K562 (cell line): ENCODE measurements at regions of chr14 and their contacts with region 1.

Region 1: DNA sequence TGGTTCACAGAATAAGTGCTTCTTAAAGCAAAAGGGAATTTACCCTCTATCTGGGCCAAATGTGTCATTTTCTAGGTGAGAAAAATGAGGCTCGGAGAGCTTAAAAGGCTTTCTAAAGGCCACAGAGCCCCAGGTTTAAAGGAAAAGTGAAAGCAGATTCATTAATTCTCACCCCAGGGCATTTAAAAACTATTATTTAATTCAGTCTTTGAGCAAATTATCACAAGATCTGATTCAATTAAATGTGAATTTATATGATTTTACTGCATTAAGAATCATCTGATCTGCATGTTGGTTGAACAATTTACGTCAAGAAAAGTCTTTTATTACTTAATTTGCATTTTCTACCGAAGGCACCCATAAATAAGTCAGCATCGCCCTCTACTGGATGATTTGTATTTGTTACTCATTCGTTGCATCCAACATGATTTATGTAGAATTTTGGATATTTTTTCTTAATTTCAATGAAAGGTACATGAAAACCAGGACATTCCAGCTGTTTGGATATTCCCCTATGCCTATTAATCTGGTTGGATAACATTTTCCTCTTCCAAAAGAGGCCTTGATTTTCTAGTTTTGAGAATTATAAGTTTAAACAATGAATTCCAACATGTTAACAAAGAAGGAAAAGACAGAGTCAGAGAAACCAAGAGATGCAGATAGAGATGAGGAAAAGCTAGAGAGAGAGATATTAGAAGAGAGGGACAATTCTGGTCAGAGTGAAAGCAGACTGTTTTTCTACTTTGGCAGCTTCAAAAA is 19.1 kb upstream of the DHRS7 start:
- DNase-seq: peak in 3 of 4 experiments; percentile 10 to 57 (median 11)
- ATAC-seq: peak; percentile 53; the same call in 2 of the 3 replicates
- H3K4me3 ChIP-seq: no peak overlapping the region
- H3K27ac ChIP-seq: no peak overlapping the region
- H3K4me1 ChIP-seq: no peaks in the 10 kb centered on the region
- H3K27me3 ChIP-seq: peaks cover 0 to 3% of the 10 kb centered on the region in 2 experiments; a peak in 1 of 5 replicates
- CTCF ChIP-seq: peak; percentile 39 to 76 (median 44); a peak in 4 of 6 replicates
- EP300 ChIP-seq: no peak
- POLR2A ChIP-seq: no peak
- RAD21 ChIP-seq: peak; percentile 83 to 88

Region 2: GRCh38 chr14:59507063-59507780 is 677.1 kb before region 1 on chr14:
- CTCF ChIA-PET with region 1: no interaction called
- POLR2A ChIA-PET with region 1: no interaction called
- in situ Hi-C with region 1: no loop called
- intact Hi-C with region 1: loop called (anchors 10 kb)
- DNase-seq: peak; percentile 50 to 68 (median 58)
- ATAC-seq: peak; percentile 98
- H3K4me3 ChIP-seq: no peak overlapping the region
- H3K27ac ChIP-seq: no peak overlapping the region
- H3K4me1 ChIP-seq: no peaks in the 10 kb centered on the region
- H3K27me3 ChIP-seq: no peaks in the 10 kb centered on the region
- CTCF ChIP-seq: peak; percentile 84 to 91 (median 90)
- EP300 ChIP-seq: no peak
- POLR2A ChIP-seq: no peak
- RAD21 ChIP-seq: peak; percentile 47 to 73

Region 3: GRCh38 chr14:59964251-59965007 is 219.9 kb before region 1 on chr14:
- CTCF ChIA-PET with region 1: interaction called, 11 read pairs
- POLR2A ChIA-PET with region 1: no interaction called
- in situ Hi-C with region 1: no loop called
- intact Hi-C with region 1: loop called (anchors 5 kb)
- DNase-seq: no peak
- ATAC-seq: no peak
- H3K4me3 ChIP-seq: no peak overlapping the region
- H3K27ac ChIP-seq: no peak overlapping the region
- H3K4me1 ChIP-seq: no peaks in the 10 kb centered on the region
- H3K27me3 ChIP-seq: no peaks in the 10 kb centered on the region
- CTCF ChIP-seq: no peak
- EP300 ChIP-seq: no peak
- POLR2A ChIP-seq: no peak
- RAD21 ChIP-seq: no peak

Region 4: GRCh38 chr14:60064491-60065072 is 119.7 kb before region 1 on chr14:
- CTCF ChIA-PET with region 1: interaction called, 21 read pairs
- POLR2A ChIA-PET with region 1: no interaction called
- in situ Hi-C with region 1: no loop called
- intact Hi-C with region 1: loop called (anchors 1 kb)
- DNase-seq: peak in 2 of 4 experiments; percentile 9 to 26
- ATAC-seq: peak; percentile 63; the same call in 2 of the 3 replicates
- H3K4me3 ChIP-seq: no peak overlapping the region
- H3K27ac ChIP-seq: no peak overlapping the region
- H3K4me1 ChIP-seq: no peaks in the 10 kb centered on the region
- H3K27me3 ChIP-seq: no peaks in the 10 kb centered on the region
- CTCF ChIP-seq: peak in 2 of 3 experiments; percentile 25 to 70; a peak in 3 of 6 replicates
- EP300 ChIP-seq: no peak
- POLR2A ChIP-seq: no peak
- RAD21 ChIP-seq: peak; percentile 75 to 85